GM23248 (cell line): ENCODE measurements at regions of chr7 and their contacts with region 1.

Region 1: GRCh38 chr7:46352004-46352954 is 431.2 kb upstream of the IGFBP3 start:
- DNase-seq: peak; percentile 74
- H3K4me3 ChIP-seq: no peak overlapping the region
- H3K27ac ChIP-seq: no peak overlapping the region
- H3K4me1 ChIP-seq: peaks cover 28% of the 10 kb centered on the region
- H3K27me3 ChIP-seq: no peaks in the 10 kb centered on the region

Region 2: DNA sequence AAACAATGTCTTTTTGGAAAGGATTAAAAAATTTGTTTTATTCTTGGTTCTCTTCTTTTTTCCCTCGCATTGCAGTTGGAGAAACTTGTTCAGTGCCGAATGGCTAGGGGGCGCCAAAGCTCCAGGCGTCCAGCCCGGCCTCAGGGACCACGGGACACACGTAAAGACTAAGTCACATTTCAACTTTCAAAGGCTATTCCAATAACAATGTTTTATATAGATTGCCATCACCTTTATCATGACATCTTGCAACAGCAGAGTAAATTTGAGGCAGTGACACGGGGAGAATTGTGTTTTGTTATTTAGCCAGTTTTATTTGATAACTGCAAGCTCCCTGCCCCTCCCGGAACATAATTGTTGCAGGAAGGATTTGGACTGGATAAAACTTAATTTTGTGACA is 429.0 kb before region 1 on chr7:
- in situ Hi-C with region 1: loop called (anchors 5 kb)
- DNase-seq: peak; percentile 90
- H3K4me3 ChIP-seq: peak overlapping the region; percentile 99; the same call in 1 of the 2 replicates
- H3K27ac ChIP-seq: peak overlapping the region; percentile 75
- H3K4me1 ChIP-seq: peaks cover 33% of the 10 kb centered on the region
- H3K27me3 ChIP-seq: no peaks in the 10 kb centered on the region